Activated naive CD8-positive, alpha-beta T cell treated with anti-CD3 and anti-CD28 coated beads, Interleukin-2, amount 10 ng/mL, durations not matched to agents 7 days and 5 days (primary cell): ENCODE measurements at regions of chr15 and their contacts with region 1.

Region 1: GRCh38 chr15:38699633-38700230 is 135.1 kb upstream of the RASGRP1 start:
- DNase-seq: peak; percentile 58
- ATAC-seq: peak; percentile 45
- H3K4me3 Mint-ChIP-seq: peak overlapping the region; percentile 1
- H3K27ac Mint-ChIP-seq: peak overlapping the region; percentile 75
- H3K4me1 Mint-ChIP-seq: peaks cover 51% of the 10 kb centered on the region
- H3K27me3 Mint-ChIP-seq: peaks cover 6% of the 10 kb centered on the region

Region 2: GRCh38 chr15:38440353-38441129 is 259.2 kb before region 1 on chr15:
- POLR2A ChIA-PET with region 1: interaction called, 11 read pairs
- DNase-seq: peak; percentile 41
- ATAC-seq: peak; percentile 86
- H3K4me3 Mint-ChIP-seq: no peak overlapping the region
- H3K27ac Mint-ChIP-seq: peak overlapping the region; percentile 80
- H3K4me1 Mint-ChIP-seq: peaks cover 7% of the 10 kb centered on the region
- H3K27me3 Mint-ChIP-seq: peaks cover 34% of the 10 kb centered on the region

Region 3: DNA sequence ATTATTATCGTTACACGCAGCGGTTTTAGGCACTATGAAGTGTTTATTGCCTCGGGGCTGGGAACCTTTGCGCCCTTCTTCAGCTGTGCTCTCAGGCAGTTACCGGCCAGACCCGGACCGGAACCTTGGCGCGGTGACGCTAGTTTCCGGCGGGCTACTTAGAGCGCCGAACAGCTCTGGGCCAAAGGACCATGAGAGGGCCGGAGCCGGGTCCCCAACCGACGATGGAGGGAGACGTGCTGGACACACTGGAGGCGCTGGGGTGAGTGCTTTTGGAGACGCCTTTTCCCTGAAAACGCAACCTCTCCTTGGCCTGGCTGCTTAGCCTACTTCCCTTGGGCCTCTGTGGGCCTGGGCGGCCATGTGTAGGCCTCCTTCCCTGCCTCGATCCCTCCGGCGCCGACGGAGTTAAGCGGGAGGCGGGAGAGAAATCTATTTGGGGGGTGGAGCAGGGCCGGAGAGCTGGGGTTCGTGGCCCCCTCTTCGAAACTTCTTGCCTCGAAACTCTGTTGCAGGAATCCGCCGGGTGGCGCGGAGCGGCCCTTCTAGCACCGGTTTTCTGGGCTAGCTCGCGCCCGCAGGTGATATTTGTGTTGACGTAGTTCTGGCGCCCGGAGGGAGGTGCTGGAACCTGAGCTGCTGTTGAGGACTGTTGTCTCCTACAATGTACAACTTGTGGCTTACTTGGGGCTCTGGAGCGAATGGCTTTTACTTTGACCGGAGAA is 245.6 kb before region 1 on chr15 and contains the start of gene FAM98B:
- POLR2A ChIA-PET with region 1: interaction called, 10 read pairs
- DNase-seq: peak; percentile 95
- ATAC-seq: peak; percentile 86
- H3K4me3 Mint-ChIP-seq: peak within 1 kb of the TSS; percentile 89
- H3K27ac Mint-ChIP-seq: peak within 1 kb of the TSS; percentile 91
- H3K4me1 Mint-ChIP-seq: peaks cover 17% of the 10 kb centered on the region
- H3K27me3 Mint-ChIP-seq: peaks cover 22% of the 10 kb centered on the region
- total RNA-seq, gene FAM98B: 24.1 to 34.6 TPM

Region 4: GRCh38 chr15:38624244-38625205 is 75.2 kb before region 1 on chr15:
- POLR2A ChIA-PET with region 1: no interaction called
- DNase-seq: no peak
- ATAC-seq: no peak
- H3K4me3 Mint-ChIP-seq: no peak overlapping the region
- H3K27ac Mint-ChIP-seq: no peak overlapping the region
- H3K4me1 Mint-ChIP-seq: peaks cover 36% of the 10 kb centered on the region
- H3K27me3 Mint-ChIP-seq: peaks cover 4% of the 10 kb centered on the region

Region 5: GRCh38 chr15:38683382-38684242 is 16.1 kb before region 1 on chr15:
- POLR2A ChIA-PET with region 1: interaction called, 79 read pairs
- DNase-seq: peak; percentile 66
- ATAC-seq: peak; percentile 44
- H3K4me3 Mint-ChIP-seq: peak overlapping the region; percentile 74
- H3K27ac Mint-ChIP-seq: peak overlapping the region; percentile 95
- H3K4me1 Mint-ChIP-seq: peaks cover 62% of the 10 kb centered on the region
- H3K27me3 Mint-ChIP-seq: no peaks in the 10 kb centered on the region